GM12878 (cell line): ENCODE measurements at regions of chr1 and their contacts with region 1.

Region 1: DNA sequence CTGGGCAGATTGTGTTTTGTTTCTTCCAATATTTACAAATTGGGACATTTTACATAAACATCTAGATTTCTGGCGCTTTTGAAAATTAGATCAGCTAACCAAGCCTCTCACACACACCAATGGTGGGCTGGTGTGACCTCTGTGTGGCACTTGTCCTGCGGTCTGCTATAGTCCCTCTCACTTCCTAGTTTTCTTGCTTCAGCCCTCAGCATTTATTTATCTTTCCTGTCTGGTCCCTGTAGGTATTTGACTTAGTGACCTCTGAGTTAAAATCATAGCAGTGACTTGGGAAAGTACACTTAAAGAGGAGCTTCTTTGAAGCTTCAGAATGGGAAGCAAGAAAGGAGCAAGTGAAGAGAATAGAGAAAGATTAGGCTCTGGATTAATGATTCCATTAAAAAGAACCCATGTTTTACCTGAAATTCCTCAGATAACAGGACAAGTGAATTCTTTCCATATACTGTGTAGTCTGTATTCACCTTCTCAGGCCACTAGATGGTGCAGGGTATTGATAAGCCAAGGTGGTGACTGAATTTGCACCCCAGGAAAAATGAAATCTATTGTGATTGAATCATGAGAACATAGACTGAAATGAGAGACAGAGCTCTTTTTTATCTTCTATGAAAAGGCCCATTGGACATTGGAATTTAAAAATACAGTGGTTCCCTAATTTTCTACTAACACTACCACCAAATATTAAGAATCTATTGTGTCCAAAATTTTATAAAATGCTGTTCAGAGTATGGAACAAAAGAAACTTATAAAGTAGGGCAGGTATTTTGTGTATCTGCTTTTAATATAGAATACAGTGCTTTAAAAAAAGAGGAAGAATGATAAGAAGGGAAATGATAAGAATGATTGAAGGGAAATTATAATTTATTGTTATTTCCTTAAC is 7.1 kb upstream of the DIPK1A start:
- DNase-seq: no peak
- ATAC-seq: peak; percentile 84
- H3K4me3 ChIP-seq: no peak overlapping the region
- H3K27ac ChIP-seq: no peak overlapping the region
- H3K4me1 ChIP-seq: peaks cover 30% of the 10 kb centered on the region
- H3K27me3 ChIP-seq: no peaks in the 10 kb centered on the region
- CTCF ChIP-seq: peak; percentile 72 to 81 (median 74)
- EP300 ChIP-seq: no peak
- POLR2A ChIP-seq: no peak
- RAD21 ChIP-seq: peak; percentile 89

Region 2: GRCh38 chr1:92567211-92567868 is 401.0 kb before region 1 on chr1:
- CTCF ChIA-PET with region 1: no interaction called
- POLR2A ChIA-PET with region 1: no interaction called
- RAD21 ChIA-PET with region 1: no interaction called
- SMC1A ChIA-PET with region 1: no interaction called
- in situ Hi-C with region 1: no loop called
- intact Hi-C with region 1: no loop called
- DNase-seq: no peak
- ATAC-seq: no peak
- H3K4me3 ChIP-seq: no peak overlapping the region
- H3K27ac ChIP-seq: no peak overlapping the region
- H3K4me1 ChIP-seq: peaks cover 10% of the 10 kb centered on the region; the same call in 1 of the 2 replicates
- H3K27me3 ChIP-seq: no peaks in the 10 kb centered on the region
- CTCF ChIP-seq: no peak
- EP300 ChIP-seq: no peak
- POLR2A ChIP-seq: no peak
- RAD21 ChIP-seq: no peak

Region 3: GRCh38 chr1:92909321-92909720 is 59.1 kb before region 1 on chr1:
- CTCF ChIA-PET with region 1: no interaction called
- POLR2A ChIA-PET with region 1: no interaction called
- RAD21 ChIA-PET with region 1: no interaction called
- SMC1A ChIA-PET with region 1: no interaction called
- in situ Hi-C with region 1: no loop called
- intact Hi-C with region 1: no loop called
- DNase-seq: no peak
- ATAC-seq: no peak
- H3K4me3 ChIP-seq: no peak overlapping the region
- H3K27ac ChIP-seq: no peak overlapping the region
- H3K4me1 ChIP-seq: no peaks in the 10 kb centered on the region
- H3K27me3 ChIP-seq: no peaks in the 10 kb centered on the region
- CTCF ChIP-seq: no peak
- EP300 ChIP-seq: no peak
- POLR2A ChIP-seq: no peak
- RAD21 ChIP-seq: no peak

Region 4: GRCh38 chr1:92980732-92981647 is 12.6 kb after region 1 on chr1:
- CTCF ChIA-PET with region 1: interaction called, 109 read pairs
- POLR2A ChIA-PET with region 1: interaction called, 103 read pairs
- RAD21 ChIA-PET with region 1: interaction called, 204 read pairs
- SMC1A ChIA-PET with region 1: interaction called, 163 read pairs
- in situ Hi-C with region 1: no loop called
- intact Hi-C with region 1: no loop called
- DNase-seq: no peak
- ATAC-seq: peak; percentile 57
- H3K4me3 ChIP-seq: peak overlapping the region; percentile 33; the same call in 1 of the 2 replicates
- H3K27ac ChIP-seq: peak overlapping the region; percentile 75
- H3K4me1 ChIP-seq: peaks cover 20% of the 10 kb centered on the region
- H3K27me3 ChIP-seq: no peaks in the 10 kb centered on the region
- CTCF ChIP-seq: no peak
- EP300 ChIP-seq: no peak
- POLR2A ChIP-seq: no peak
- RAD21 ChIP-seq: no peak

Region 5: DNA sequence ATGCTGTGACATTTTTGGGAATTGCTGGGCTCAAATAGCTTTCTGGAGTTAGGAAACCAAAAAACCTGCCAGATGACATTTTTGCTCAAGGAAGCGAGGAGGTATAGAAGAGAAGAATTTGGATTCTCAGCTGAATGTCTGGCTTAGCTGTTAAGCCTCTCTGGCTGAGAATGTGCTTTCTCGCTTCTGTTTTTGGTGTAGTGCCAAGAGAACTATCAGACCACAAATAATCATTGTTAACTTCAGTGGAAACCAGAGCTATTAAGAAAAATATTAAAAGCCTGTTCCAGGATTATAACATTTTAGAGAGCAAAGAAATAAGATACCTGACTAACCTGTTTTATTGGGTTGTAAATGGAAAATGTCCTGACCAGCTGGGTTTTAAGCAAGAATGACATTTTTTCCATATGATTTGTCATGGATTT is 32.4 kb after region 1 on chr1:
- CTCF ChIA-PET with region 1: interaction called, 15 read pairs
- POLR2A ChIA-PET with region 1: interaction called, 4 read pairs
- RAD21 ChIA-PET with region 1: interaction called, 5 read pairs
- SMC1A ChIA-PET with region 1: interaction called, 29 read pairs
- in situ Hi-C with region 1: no loop called
- intact Hi-C with region 1: no loop called
- DNase-seq: no peak
- ATAC-seq: peak; percentile 71
- H3K4me3 ChIP-seq: no peak overlapping the region
- H3K27ac ChIP-seq: no peak overlapping the region
- H3K4me1 ChIP-seq: peaks cover 6% of the 10 kb centered on the region
- H3K27me3 ChIP-seq: no peaks in the 10 kb centered on the region
- CTCF ChIP-seq: no peak
- EP300 ChIP-seq: no peak
- POLR2A ChIP-seq: no peak
- RAD21 ChIP-seq: no peak

Region 6: GRCh38 chr1:93015590-93015989 is 47.2 kb after region 1 on chr1:
- CTCF ChIA-PET with region 1: interaction called, 18 read pairs
- POLR2A ChIA-PET with region 1: interaction called, 5 read pairs
- RAD21 ChIA-PET with region 1: interaction called, 6 read pairs
- SMC1A ChIA-PET with region 1: interaction called, 8 read pairs
- in situ Hi-C with region 1: no loop called
- intact Hi-C with region 1: no loop called
- DNase-seq: no peak
- ATAC-seq: no peak
- H3K4me3 ChIP-seq: no peak overlapping the region
- H3K27ac ChIP-seq: no peak overlapping the region
- H3K4me1 ChIP-seq: peaks cover 21% of the 10 kb centered on the region
- H3K27me3 ChIP-seq: no peaks in the 10 kb centered on the region
- CTCF ChIP-seq: no peak
- EP300 ChIP-seq: no peak
- POLR2A ChIP-seq: no peak
- RAD21 ChIP-seq: no peak